SK-N-SH (cell line): ENCODE measurements at regions of chr6 and their contacts with region 1.

Region 1: GRCh38 chr6:25263657-25264056 is 15.5 kb upstream of the CARMIL1 start:
- DNase-seq: no peak
- H3K4me3 ChIP-seq: no peak overlapping the region
- H3K27ac ChIP-seq: peak overlapping the region in 1 of 2 experiments; percentile 85; a peak in 2 of 4 replicates
- H3K4me1 ChIP-seq: no peaks in the 10 kb centered on the region
- H3K27me3 ChIP-seq: no peaks in the 10 kb centered on the region
- CTCF ChIP-seq: no peak
- EP300 ChIP-seq: peak in 1 of 2 experiments; percentile 85; a peak in 2 of 4 replicates
- RAD21 ChIP-seq: no peak

Region 2: GRCh38 chr6:25242567-25242966 is 21.1 kb before region 1 on chr6:
- CTCF ChIA-PET with region 1: interaction called, 10 read pairs
- POLR2A ChIA-PET with region 1: no interaction called
- DNase-seq: no peak
- H3K4me3 ChIP-seq: no peak overlapping the region
- H3K27ac ChIP-seq: no peak overlapping the region
- H3K4me1 ChIP-seq: no peaks in the 10 kb centered on the region
- H3K27me3 ChIP-seq: no peaks in the 10 kb centered on the region
- CTCF ChIP-seq: no peak
- EP300 ChIP-seq: no peak
- RAD21 ChIP-seq: no peak

Region 3: DNA sequence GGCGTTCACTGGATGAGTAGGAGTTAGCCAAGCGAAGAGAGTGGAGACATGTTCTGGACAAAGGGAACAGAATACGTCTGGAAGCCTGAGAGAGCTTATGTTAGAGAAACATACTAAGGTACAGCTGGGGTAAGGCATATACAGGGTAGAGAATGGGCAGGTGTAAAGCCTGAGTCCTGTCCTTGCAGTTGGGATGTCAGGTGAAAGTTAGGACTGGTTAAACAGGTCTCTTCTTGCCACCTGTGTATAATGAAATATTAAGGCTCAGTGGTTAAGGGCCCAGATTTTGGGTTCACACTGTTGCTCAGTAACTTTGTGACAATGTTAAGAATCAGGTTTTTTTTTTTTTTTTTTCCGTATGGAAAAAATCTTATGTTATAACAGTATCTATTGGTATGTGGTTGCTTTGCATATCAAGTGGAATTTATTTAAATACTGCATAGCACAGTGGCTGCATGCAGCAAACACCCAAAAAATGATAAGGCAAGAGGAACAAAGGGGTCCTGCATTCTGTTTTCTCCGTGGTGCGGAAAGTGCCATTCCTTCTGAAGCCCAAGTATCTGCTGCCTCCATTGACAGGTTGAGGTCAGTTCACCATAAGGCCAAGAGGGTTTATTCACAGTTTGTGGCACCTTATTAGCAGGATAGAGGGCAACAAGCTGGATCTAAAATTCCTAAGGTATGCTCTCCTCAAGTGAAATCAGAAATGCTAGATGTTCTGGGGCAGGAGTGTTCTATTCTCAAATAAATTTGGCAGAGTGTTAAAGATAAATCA is 24.7 kb after region 1 on chr6:
- CTCF ChIA-PET with region 1: no interaction called
- POLR2A ChIA-PET with region 1: no interaction called
- DNase-seq: no peak
- H3K4me3 ChIP-seq: no peak overlapping the region
- H3K27ac ChIP-seq: no peak overlapping the region
- H3K4me1 ChIP-seq: no peaks in the 10 kb centered on the region
- H3K27me3 ChIP-seq: no peaks in the 10 kb centered on the region
- CTCF ChIP-seq: no peak
- EP300 ChIP-seq: no peak
- RAD21 ChIP-seq: no peak

Region 4: GRCh38 chr6:25490018-25490801 is 226.6 kb after region 1 on chr6:
- CTCF ChIA-PET with region 1: interaction called, 49 read pairs
- POLR2A ChIA-PET with region 1: interaction called, 5 read pairs
- DNase-seq: peak; percentile 48
- H3K4me3 ChIP-seq: peak overlapping the region in 1 of 2 experiments; percentile 16; a peak in 1 of 4 replicates
- H3K27ac ChIP-seq: no peak overlapping the region; a peak in 1 of 4 replicates
- H3K4me1 ChIP-seq: peaks cover 0 to 11% of the 10 kb centered on the region in 2 experiments; a peak in 2 of 4 replicates
- H3K27me3 ChIP-seq: no peaks in the 10 kb centered on the region
- CTCF ChIP-seq: peak; percentile 86
- EP300 ChIP-seq: no peak
- RAD21 ChIP-seq: peak; percentile 93

Region 5: GRCh38 chr6:25590986-25591385 is 327.3 kb after region 1 on chr6:
- CTCF ChIA-PET with region 1: interaction called, 17 read pairs
- POLR2A ChIA-PET with region 1: no interaction called
- DNase-seq: peak; percentile 25
- H3K4me3 ChIP-seq: no peak overlapping the region
- H3K27ac ChIP-seq: peak overlapping the region in 1 of 2 experiments; percentile 60; a peak in 2 of 4 replicates
- H3K4me1 ChIP-seq: peaks cover 0 to 10% of the 10 kb centered on the region in 2 experiments; a peak in 2 of 4 replicates
- H3K27me3 ChIP-seq: no peaks in the 10 kb centered on the region
- CTCF ChIP-seq: no peak
- EP300 ChIP-seq: no peak
- RAD21 ChIP-seq: no peak

Region 6: GRCh38 chr6:25889877-25890853 is 626.5 kb after region 1 on chr6:
- CTCF ChIA-PET with region 1: interaction called, 12 read pairs
- POLR2A ChIA-PET with region 1: no interaction called
- DNase-seq: peak; percentile 58
- H3K4me3 ChIP-seq: no peak overlapping the region; a peak in 1 of 4 replicates
- H3K27ac ChIP-seq: no peak overlapping the region
- H3K4me1 ChIP-seq: no peaks in the 10 kb centered on the region
- H3K27me3 ChIP-seq: no peaks in the 10 kb centered on the region
- CTCF ChIP-seq: peak; percentile 57
- EP300 ChIP-seq: no peak
- RAD21 ChIP-seq: peak; percentile 95